Activated T-helper 1 cell treated with anti-CD3 and anti-CD28 coated beads, Interleukin-12 subunit alpha, Interleukin-12 subunit beta, Interleukin-2, Interleukin-4 antibody, amounts not matched to agents 30 ng/mL and 10 ng/mL and 1 ng/mL, durations not matched to agents 14 hours and 24 hours and 36 hours (primary cell): ENCODE measurements at regions of chrX and their contacts with region 1.

Region 1: DNA sequence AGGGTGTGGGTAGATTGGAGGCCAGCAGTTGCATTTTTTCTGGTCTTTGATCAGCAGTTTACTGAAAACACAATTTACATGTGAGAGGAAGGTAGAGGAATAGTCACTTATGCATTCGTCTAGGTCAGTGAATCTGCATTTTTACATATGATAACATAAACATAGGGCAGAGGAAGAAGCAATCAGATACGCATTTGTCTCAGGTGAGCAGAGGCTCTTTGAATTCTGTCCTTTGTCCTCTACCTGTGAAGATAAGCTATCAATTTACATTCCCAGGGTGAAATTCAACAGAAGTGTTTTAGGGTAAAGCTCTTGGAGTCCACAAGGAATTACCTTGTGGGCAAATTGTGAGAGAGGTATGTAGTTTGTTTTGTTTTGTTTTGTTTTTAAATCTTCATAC is 306.5 kb downstream of the MAGEB5 start:
- DNase-seq: no peak
- H3K4me3 Mint-ChIP-seq: no peak overlapping the region
- H3K27ac Mint-ChIP-seq: no peak overlapping the region
- H3K4me1 Mint-ChIP-seq: no peaks in the 10 kb centered on the region
- H3K27me3 Mint-ChIP-seq: no peaks in the 10 kb centered on the region

Region 2: DNA sequence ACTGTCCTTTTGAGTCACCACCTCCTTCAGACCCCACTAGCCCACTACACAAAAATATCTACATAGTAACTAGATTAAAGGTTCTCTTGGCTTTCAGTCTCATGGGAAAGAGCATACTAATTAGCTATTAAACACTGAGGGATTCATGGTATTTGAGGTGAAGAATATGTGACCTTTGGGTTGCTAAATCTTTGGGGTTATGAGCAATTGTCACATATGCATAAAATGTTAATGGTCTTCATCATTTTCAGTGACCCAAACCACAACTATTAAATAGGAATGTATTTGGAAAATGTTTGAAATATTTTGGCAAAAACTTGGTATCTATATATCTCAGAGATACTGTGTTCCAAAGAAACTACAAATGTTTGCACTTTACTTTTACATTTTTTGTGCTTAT is 58.6 kb after region 1 on chrX:
- intact Hi-C with region 1: loop called (anchors 2 kb)
- DNase-seq: no peak
- H3K4me3 Mint-ChIP-seq: no peak overlapping the region
- H3K27ac Mint-ChIP-seq: no peak overlapping the region
- H3K4me1 Mint-ChIP-seq: no peaks in the 10 kb centered on the region
- H3K27me3 Mint-ChIP-seq: no peaks in the 10 kb centered on the region